Activated CD4-positive, alpha-beta T cell treated with anti-CD3 and anti-CD28 coated beads for 36 hours (primary cell): ENCODE measurements at regions of chr12 and their contacts with region 1.

Region 1: DNA sequence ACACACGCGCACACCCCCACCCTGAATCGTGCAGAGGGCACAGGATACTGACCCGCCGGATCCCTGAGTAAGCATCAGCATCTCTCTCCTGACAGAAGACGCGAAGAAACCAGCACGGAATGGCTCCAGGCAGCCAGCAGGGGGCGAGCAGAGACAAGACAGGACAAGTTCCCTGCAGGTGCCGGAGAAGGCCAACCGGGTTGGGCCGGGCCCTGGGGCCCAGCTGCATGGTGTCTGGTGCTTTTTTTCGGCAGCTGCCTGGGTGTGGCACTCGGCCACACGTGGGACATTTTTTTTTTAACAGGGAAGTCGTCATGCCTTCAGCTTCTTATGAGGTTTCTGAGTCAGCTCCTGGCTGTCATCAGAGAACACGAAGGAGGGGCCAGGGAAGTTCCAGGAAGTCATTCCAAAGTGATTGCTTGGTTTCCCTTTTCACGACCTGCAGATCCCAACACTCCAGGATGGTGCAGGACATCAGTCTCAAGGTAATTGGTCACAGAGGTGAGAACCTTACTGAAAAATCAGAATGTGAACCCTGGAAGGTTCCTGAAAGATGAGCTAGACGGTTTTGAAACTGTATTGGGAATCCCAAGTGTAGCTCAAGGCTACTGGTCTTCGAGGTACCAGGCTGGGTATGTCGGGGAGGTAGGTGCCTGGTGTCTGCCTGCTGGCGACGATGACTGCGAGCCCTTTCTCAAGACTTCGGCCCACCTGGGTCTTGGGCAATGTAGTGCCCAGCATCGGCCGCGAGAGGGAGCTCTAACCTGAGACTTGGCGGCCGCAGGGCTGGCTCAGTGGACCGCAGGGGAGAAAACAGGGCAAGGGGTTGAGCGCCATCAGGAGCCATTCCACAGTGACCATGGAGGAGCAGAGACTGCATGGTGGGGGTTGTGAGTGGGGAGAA is 190.8 kb upstream of the PRMT8 start:
- DNase-seq: peak; percentile 93
- ATAC-seq: peak; percentile 85
- H3K4me3 Mint-ChIP-seq: peak overlapping the region; percentile 54
- H3K27ac Mint-ChIP-seq: peak overlapping the region; percentile 82
- H3K4me1 Mint-ChIP-seq: peaks cover 10% of the 10 kb centered on the region
- H3K27me3 Mint-ChIP-seq: peaks cover 7% of the 10 kb centered on the region

Region 2: GRCh38 chr12:3281588-3282383 is 18.4 kb before region 1 on chr12:
- CTCF ChIA-PET with region 1: interaction called, 14 read pairs
- POLR2A ChIA-PET with region 1: no interaction called
- intact Hi-C with region 1: no loop called
- DNase-seq: no peak
- ATAC-seq: no peak
- H3K4me3 Mint-ChIP-seq: no peak overlapping the region
- H3K27ac Mint-ChIP-seq: no peak overlapping the region
- H3K4me1 Mint-ChIP-seq: no peaks in the 10 kb centered on the region
- H3K27me3 Mint-ChIP-seq: peaks cover 2% of the 10 kb centered on the region

Region 3: DNA sequence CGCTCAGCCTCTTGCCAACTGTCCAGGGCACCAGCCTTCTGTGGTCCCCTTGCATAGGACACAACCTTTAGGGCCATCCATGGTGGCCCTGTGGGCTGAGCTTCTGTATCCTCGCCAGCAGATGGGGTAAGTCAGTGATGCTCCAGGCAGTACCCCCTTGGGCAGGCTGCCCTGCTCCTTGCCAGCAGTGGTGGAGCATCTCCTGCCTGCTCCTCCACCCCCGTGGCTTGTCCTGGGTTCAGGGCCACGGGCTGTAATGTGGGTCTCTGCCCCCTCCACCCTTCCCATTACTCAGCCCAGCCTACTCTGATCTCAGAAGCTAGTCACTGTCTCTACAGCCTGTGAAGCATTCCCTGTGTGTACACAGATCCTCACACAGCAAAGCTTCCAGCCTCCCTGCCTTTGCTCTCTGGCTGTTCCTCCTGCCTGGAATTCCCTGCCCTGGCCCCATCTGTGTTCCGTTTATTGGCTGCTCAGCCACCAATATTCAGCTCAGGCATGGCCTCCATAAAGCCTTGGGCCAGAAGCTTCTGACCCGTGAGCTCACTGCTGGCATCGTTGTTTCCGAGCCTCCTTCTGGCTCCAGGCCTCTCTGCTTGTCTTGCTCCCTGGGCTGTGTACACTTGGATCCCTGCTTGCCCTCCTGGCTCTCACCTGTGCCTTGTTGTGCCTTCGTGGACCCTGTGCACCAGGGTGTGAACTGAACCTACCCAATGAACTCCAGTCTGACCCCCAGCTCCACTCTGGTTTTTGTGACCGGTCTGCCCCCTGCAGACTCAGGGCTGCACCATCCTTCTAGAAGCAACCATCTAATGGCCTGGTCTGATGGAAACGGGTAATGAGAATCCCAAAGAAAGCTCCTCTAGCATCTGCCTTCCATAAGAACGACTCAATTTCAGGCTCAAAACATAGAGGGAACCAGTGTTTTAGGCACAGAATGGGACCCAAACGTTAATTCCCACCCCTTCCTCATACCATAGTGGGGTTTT is 13.8 kb after region 1 on chr12:
- CTCF ChIA-PET with region 1: interaction called, 42 read pairs
- POLR2A ChIA-PET with region 1: interaction called, 5 read pairs
- intact Hi-C with region 1: no loop called
- DNase-seq: peak; percentile 44
- ATAC-seq: peak; percentile 78
- H3K4me3 Mint-ChIP-seq: no peak overlapping the region
- H3K27ac Mint-ChIP-seq: no peak overlapping the region
- H3K4me1 Mint-ChIP-seq: no peaks in the 10 kb centered on the region
- H3K27me3 Mint-ChIP-seq: peaks cover 12% of the 10 kb centered on the region

Region 4: GRCh38 chr12:3604748-3605586 is 304.8 kb after region 1 on chr12:
- CTCF ChIA-PET with region 1: interaction called, 11 read pairs
- POLR2A ChIA-PET with region 1: no interaction called
- intact Hi-C with region 1: no loop called
- DNase-seq: no peak
- ATAC-seq: no peak
- H3K4me3 Mint-ChIP-seq: no peak overlapping the region
- H3K27ac Mint-ChIP-seq: no peak overlapping the region
- H3K4me1 Mint-ChIP-seq: no peaks in the 10 kb centered on the region
- H3K27me3 Mint-ChIP-seq: no peaks in the 10 kb centered on the region

Region 5: DNA sequence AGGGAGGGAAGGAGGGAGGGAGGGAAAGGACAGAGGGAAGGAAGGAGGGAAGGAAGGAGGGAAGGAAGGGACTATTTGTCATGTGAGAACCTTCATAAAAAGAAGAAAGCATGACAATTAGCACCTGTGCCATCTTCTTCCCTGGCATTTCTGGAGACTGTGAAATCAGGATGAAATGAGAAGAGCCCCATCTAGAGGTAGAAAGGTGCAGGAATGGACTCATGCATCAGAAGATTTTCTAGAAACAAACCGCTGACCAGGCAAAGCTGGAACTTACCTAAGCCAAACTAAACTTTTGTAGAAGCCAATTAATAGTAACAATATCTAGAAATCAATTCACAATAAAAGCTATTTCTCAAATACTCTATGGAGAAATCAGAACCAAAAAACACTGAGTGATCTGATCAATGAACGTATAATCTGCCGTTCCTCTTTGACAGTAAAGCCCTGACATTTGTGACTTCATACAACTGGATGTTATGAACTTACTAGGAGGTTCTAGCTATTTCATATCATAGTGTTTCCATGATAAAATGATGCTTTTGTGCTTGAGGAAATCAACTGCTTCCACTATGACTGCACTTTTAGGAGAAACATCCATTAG is 477.1 kb after region 1 on chr12:
- CTCF ChIA-PET with region 1: interaction called, 6 read pairs
- POLR2A ChIA-PET with region 1: no interaction called
- intact Hi-C with region 1: loop called (anchors 1 to 2 kb)
- DNase-seq: peak; percentile 13
- ATAC-seq: peak; percentile 61
- H3K4me3 Mint-ChIP-seq: no peak overlapping the region
- H3K27ac Mint-ChIP-seq: no peak overlapping the region
- H3K4me1 Mint-ChIP-seq: peaks cover 4% of the 10 kb centered on the region
- H3K27me3 Mint-ChIP-seq: no peaks in the 10 kb centered on the region

Region 6: GRCh38 chr12:3809347-3810015 is 509.3 kb after region 1 on chr12:
- CTCF ChIA-PET with region 1: interaction called, 39 read pairs
- POLR2A ChIA-PET with region 1: no interaction called
- intact Hi-C with region 1: loop called (anchors 1 kb)
- DNase-seq: no peak
- ATAC-seq: no peak
- H3K4me3 Mint-ChIP-seq: no peak overlapping the region
- H3K27ac Mint-ChIP-seq: no peak overlapping the region
- H3K4me1 Mint-ChIP-seq: peaks cover 24% of the 10 kb centered on the region
- H3K27me3 Mint-ChIP-seq: no peaks in the 10 kb centered on the region